Panc1 (cell line): ENCODE measurements at regions of chr14 and their contacts with region 1.

Region 1: DNA sequence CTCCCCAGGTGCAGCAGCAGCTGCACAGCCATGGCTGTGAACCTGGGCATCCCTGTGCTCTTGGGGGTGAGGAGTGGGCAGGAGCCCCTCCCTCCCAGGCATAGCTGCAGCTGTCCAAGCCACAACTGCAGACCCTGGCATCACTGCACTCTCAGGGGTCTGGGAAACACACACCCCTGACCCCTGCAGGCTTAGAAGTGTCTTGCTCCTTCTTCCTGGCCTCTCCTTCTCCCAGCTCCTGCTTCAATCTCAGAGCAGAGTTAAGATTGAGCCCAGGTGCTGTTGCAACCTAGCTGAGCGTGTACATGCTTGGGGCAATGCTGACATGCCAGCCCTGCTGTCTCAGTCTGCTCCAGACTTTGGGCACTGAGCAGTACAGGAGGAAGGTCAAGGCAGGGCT is 833.6 kb downstream of the FLRT2 start:
- DNase-seq: no peak
- ATAC-seq: no peak
- H3K4me3 ChIP-seq: no peak overlapping the region
- H3K27ac ChIP-seq: no peak overlapping the region
- H3K4me1 ChIP-seq: no peaks in the 10 kb centered on the region
- H3K27me3 ChIP-seq: no peaks in the 10 kb centered on the region
- CTCF ChIP-seq: no peak

Region 2: GRCh38 chr14:84975241-84975902 is 1388.2 kb before region 1 on chr14:
- CTCF ChIA-PET with region 1: interaction called, 10 read pairs
- POLR2A ChIA-PET with region 1: no interaction called
- in situ Hi-C with region 1: no loop called
- intact Hi-C with region 1: no loop called
- DNase-seq: no peak
- ATAC-seq: no peak
- H3K4me3 ChIP-seq: no peak overlapping the region
- H3K27ac ChIP-seq: no peak overlapping the region
- H3K4me1 ChIP-seq: no peaks in the 10 kb centered on the region
- H3K27me3 ChIP-seq: no peaks in the 10 kb centered on the region
- CTCF ChIP-seq: no peak

Region 3: GRCh38 chr14:86310611-86311010 is 53.0 kb before region 1 on chr14:
- CTCF ChIA-PET with region 1: no interaction called
- POLR2A ChIA-PET with region 1: no interaction called
- in situ Hi-C with region 1: no loop called
- intact Hi-C with region 1: no loop called
- DNase-seq: no peak
- ATAC-seq: no peak
- H3K4me3 ChIP-seq: no peak overlapping the region
- H3K27ac ChIP-seq: no peak overlapping the region
- H3K4me1 ChIP-seq: no peaks in the 10 kb centered on the region
- H3K27me3 ChIP-seq: no peaks in the 10 kb centered on the region
- CTCF ChIP-seq: no peak

Region 4: GRCh38 chr14:86604561-86604960 is 241.0 kb after region 1 on chr14:
- CTCF ChIA-PET with region 1: no interaction called
- POLR2A ChIA-PET with region 1: no interaction called
- in situ Hi-C with region 1: no loop called
- intact Hi-C with region 1: no loop called
- DNase-seq: no peak
- ATAC-seq: no peak
- H3K4me3 ChIP-seq: no peak overlapping the region
- H3K27ac ChIP-seq: no peak overlapping the region
- H3K4me1 ChIP-seq: no peaks in the 10 kb centered on the region
- H3K27me3 ChIP-seq: no peaks in the 10 kb centered on the region
- CTCF ChIP-seq: no peak